ENCODE measurements at regions of chr3 and their contacts with region 1.

Region 1: GRCh38 chr3:89320186-89320585 is 212.8 kb downstream of the EPHA3 start:
- DNase-seq: no peak
- ATAC-seq: no peak

Region 2: DNA sequence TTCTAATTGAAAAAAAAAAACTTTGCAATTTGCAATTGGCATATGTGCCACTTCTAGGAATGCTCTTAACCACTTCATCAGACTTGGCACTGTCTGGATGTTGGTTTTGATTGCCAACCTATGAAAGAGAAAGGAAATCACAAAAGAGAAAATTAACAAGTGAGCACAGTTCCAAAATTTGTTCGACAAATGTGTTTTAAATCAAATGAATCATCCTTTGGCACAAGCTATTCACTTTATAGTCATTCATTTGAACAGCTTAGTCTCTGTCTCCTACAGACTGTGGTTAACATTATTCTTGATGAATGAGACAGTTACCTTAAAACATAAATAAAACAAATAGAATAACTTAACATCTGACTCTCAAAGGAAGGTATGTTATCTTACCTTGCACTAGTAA is 52.3 kb after region 1 on chr3:
- intact Hi-C with region 1: loop called (anchors 10 kb)
- DNase-seq: no peak
- ATAC-seq: peak; percentile 59